AG04449 (cell line): ENCODE measurements at regions of chr12 and their contacts with region 1.

Region 1: DNA sequence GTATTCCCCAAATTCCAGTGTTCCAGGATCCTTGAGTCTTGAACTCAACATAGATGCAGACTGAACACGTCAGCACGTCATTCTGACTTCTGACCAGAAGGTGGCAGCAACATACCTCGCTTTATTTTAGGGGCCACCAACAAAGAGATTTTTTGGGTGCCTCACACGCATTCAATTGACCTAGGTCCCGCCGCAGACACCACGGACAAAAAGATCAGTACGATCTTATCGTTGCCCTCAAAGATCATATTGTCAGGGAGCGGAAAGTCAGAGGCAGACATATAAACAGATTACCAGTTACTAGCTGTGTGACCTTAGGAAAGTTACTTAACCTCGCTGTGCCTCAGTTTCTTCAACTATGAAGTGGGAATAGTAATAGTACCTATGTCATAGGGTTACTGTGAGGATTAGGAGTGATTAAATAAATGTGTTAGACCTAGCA is 6.5 kb upstream of the PRPH start:
- DNase-seq: no peak
- H3K4me3 ChIP-seq: no peak overlapping the region
- CTCF ChIP-seq: peak; percentile 68

Region 2: GRCh38 chr12:48795480-48796455 is 492.7 kb before region 1 on chr12:
- CTCF ChIA-PET with region 1: no interaction called
- POLR2A ChIA-PET with region 1: no interaction called
- DNase-seq: no peak
- H3K4me3 ChIP-seq: no peak overlapping the region
- CTCF ChIP-seq: peak; percentile 81

Region 3: GRCh38 chr12:49274396-49275286 is 13.8 kb before region 1 on chr12:
- CTCF ChIA-PET with region 1: interaction called, 31 read pairs
- POLR2A ChIA-PET with region 1: no interaction called
- DNase-seq: no peak
- H3K4me3 ChIP-seq: no peak overlapping the region
- CTCF ChIP-seq: no peak

Region 4: GRCh38 chr12:49322708-49323523 is 34.5 kb after region 1 on chr12 and contains the start of gene TROAP:
- CTCF ChIA-PET with region 1: interaction called, 11 read pairs
- POLR2A ChIA-PET with region 1: no interaction called
- DNase-seq: peak; percentile 80
- H3K4me3 ChIP-seq: peak within 1 kb of the TSS; percentile 78
- CTCF ChIP-seq: no peak

Region 5: GRCh38 chr12:49336645-49337584 is 48.5 kb after region 1 on chr12 and contains the start of gene C1QL4:
- CTCF ChIA-PET with region 1: interaction called, 57 read pairs
- POLR2A ChIA-PET with region 1: no interaction called
- DNase-seq: no peak
- H3K4me3 ChIP-seq: peak within 1 kb of the TSS; percentile 54
- CTCF ChIP-seq: peak; percentile 93

Region 6: GRCh38 chr12:49347384-49348237 is 59.2 kb after region 1 on chr12:
- CTCF ChIA-PET with region 1: interaction called, 289 read pairs
- POLR2A ChIA-PET with region 1: no interaction called
- DNase-seq: no peak
- H3K4me3 ChIP-seq: peak overlapping the region; percentile 47
- CTCF ChIP-seq: peak; percentile 96

Region 7: DNA sequence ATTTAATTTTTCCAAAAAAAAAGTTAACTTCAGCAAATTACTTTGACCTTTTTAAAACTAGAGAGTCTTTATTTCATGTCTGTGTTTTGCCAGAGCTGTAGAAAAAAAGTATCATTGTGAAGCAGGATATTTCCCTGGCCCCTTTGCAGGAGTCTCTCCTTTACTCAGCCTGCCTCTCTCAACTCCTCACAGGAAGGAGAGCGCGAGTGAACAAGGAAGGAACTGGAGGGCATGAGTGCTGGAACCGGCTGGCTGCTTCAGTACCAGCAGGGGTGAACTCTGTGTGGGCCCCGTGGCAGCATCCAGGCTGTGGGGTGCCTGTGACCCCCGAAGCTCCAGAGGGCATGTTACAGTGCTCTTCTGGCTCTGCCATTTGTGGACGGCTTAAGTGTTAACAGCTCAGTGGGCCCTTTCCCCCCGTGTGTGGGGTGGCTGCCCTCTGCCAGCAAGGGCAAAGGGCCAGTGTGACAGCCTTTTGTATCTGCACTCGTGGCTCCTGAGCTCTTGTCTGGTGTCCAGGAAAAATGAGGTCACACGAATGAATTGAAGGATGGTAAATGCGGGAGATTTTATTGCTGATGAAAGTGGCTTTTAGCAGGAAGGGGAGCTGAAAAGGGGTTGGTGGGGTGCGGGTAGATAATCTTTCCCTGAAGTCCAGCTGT is 173.8 kb after region 1 on chr12:
- CTCF ChIA-PET with region 1: no interaction called
- POLR2A ChIA-PET with region 1: no interaction called
- DNase-seq: no peak
- H3K4me3 ChIP-seq: no peak overlapping the region
- CTCF ChIP-seq: no peak